Upper lobe of right lung (tissue), 1 donor: ENCODE measurements at regions of chr6 and their contacts with region 1.

Region 1: GRCh38 chr6:9346923-9347322 is 911.6 kb upstream of the SLC35B3 start:
- DNase-seq: no peak
- ATAC-seq: no peak
- H3K4me3 ChIP-seq: no peak overlapping the region
- H3K27ac ChIP-seq: no peak overlapping the region
- H3K4me1 ChIP-seq: no peaks in the 10 kb centered on the region
- H3K27me3 ChIP-seq: no peaks in the 10 kb centered on the region
- CTCF ChIP-seq: no peak

Region 2: DNA sequence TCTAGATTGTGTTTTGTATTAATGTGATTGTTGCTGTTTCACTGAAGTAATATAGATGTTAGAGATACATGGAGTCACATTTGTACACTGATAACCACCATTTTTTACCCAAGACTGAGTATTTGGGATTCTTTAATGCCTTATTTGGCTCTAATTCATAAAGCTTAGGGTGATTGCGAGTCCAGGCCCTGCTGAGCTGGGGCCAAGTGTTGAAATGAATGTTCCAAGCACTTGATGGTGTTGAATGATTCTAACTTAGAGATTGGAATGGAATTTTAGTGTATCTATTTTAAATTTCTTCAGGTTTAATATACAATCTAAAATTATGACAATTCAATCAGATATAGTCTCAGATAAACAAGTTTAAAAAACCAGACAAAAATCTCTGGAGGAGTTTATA is 582.2 kb before region 1 on chr6:
- intact Hi-C with region 1: loop called (anchors 10 kb)
- DNase-seq: no peak
- ATAC-seq: no peak
- H3K4me3 ChIP-seq: no peak overlapping the region
- H3K27ac ChIP-seq: no peak overlapping the region
- H3K4me1 ChIP-seq: no peaks in the 10 kb centered on the region
- H3K27me3 ChIP-seq: no peaks in the 10 kb centered on the region
- CTCF ChIP-seq: no peak